ENCODE measurements at regions of chr16 and their contacts with region 1.

Region 1: DNA sequence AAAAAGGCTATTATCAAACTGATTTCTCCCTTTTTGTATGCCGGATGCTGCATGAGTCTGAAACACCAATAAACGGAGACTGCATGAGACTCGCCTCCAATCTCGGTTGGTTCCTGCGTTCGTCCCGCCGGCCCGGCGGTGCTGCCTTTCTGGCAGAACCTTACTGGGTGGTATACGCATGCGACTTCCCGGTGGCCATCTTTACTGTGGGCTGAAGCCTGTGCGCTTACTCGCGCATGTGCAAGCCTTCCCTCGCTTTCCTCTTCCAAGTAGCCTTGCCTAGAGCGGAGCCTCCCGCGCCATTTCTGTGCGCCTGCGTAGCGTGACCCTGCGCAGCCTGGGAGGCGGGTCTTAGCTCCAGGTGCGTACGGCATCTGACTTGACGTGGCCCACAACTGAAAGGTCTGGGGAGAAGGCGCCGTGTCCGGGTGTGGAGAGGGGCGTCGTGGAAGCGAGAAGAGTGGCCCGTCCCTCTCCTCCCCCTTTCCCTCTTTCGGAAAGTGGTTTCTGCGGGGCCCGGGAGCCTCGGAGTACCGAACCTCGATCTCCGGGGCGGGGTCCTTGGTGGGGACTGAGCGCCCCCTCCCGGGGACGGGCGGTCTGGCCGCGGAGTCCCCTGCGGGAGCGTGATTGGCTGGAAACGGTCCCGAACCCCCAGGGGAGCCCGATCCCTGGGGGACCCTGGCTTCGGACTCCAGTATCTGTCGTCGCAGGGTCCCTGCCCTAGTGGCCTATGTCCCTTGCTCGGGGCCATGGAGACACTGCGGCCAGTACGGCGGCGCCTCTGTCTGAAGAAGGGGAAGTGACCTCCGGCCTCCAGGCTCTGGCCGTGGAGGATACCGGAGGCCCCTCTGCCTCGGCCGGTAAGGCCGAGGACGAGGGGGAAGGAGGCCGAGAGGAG is at the start of gene PAGR1:
- DNase-seq: peak; percentile 98 to 99 (median 98)
- ATAC-seq: peak; percentile 71 to 82 (median 78)
- H3K4me3 ChIP-seq: peak within 1 kb of the TSS; percentile 66 to 89 (median 77)
- H3K27ac ChIP-seq: peak within 1 kb of the TSS; percentile 78 to 88 (median 87)
- H3K4me1 ChIP-seq: peaks cover 0 to 41% (median 13%) of the 10 kb centered on the region in 4 donors
- H3K27me3 ChIP-seq: no peaks in the 10 kb centered on the region
- CTCF ChIP-seq: peak; percentile 88 to 96 (median 94)
- POLR2A ChIP-seq: peak; percentile 79
- total RNA-seq, gene PAGR1: 8.5 to 26.1 (median 11.5) TPM

Region 2: DNA sequence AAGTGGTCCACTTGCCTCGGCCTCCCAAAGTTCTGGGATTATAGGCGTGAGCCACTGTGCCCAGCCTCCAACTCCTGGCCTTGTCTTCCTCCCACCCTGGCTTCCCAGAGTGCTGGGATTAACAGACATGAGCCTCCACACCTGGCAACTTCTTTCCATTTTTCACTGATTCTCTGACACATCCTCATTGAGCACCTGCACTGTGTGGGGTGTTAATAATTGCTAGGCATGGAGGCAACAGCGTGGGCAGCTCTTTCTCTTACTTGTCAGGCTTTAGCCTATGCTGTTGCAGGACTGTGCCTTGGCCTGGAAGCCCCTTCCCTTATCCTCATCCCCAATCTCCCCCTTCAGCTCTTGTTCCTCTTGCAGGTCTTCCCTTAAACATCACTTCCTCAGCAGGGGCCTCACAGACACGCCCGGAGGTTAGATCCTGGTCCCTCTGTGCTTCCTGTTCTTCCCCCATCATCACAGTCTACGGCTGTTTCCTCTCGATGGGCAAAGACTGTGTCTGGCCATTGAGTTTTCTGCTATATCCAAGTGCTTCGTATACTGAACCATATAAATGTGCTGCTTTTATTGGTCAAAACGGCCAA is 129.2 kb before region 1 on chr16:
- intact Hi-C with region 1: no loop called
- DNase-seq: no peak
- ATAC-seq: no peak
- H3K4me3 ChIP-seq: no peak overlapping the region
- H3K27ac ChIP-seq: no peak overlapping the region
- H3K4me1 ChIP-seq: no peaks in the 10 kb centered on the region
- H3K27me3 ChIP-seq: no peaks in the 10 kb centered on the region
- CTCF ChIP-seq: no peak
- POLR2A ChIP-seq: no peak

Region 3: DNA sequence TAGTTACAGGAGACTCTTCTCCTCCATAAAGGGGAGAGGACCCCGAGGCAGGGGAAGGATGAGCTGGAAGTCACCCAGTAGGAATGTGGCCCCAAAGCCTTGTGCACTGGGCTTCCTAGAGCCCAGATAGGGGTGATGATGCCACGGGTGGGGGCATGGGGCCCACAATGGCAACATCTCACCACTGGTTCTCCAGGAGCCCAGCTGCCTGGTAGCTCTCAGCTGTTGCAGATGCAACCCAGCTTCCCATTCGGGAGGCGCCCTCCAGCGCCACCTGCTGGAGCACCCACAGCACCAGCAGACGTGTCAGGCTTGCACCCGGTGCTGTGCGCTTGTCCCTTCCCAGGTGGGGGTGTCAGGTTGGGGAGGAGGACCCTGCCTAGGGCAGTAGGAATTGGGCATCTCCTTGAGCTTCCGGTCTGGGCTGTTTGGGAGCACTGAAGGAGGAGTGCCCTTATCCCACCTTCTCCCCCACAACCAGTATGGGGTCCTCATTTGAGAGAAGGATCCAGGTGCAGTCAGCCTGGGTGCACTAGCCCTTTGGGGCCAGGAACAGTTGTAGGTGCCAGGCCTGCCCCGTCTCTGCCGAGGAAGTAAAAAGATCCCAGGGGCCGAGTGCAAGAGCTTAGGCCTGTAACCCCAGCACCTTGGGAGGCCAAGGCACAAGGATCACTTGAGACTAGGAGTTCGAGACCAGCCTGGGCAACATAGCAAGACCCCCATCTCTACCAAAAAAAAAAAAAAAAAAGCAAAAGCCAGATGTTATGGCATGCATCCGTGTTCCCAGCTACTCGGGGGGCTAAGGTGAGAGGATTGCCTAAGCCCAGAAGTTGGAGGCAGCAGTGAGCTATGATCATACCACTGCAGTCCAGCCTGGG is 32.6 kb after region 1 on chr16:
- intact Hi-C with region 1: loop called in 1 of 2 experiments (anchors 5 kb)
- DNase-seq: peak; percentile 81 to 84 (median 83)
- ATAC-seq: peak; percentile 84 to 95 (median 89)
- H3K4me3 ChIP-seq: no peak overlapping the region
- H3K27ac ChIP-seq: no peak overlapping the region
- H3K4me1 ChIP-seq: no peaks in the 10 kb centered on the region
- H3K27me3 ChIP-seq: no peaks in the 10 kb centered on the region
- CTCF ChIP-seq: peak; percentile 84 to 95 (median 87)
- POLR2A ChIP-seq: no peak

Region 4: GRCh38 chr16:29995911-29996772 is 180.1 kb after region 1 on chr16 and contains the start of gene INO80E:
- intact Hi-C with region 1: loop called in 1 of 2 experiments (anchors 10 kb)
- DNase-seq: peak; percentile 99 to 100 (median 99)
- ATAC-seq: peak; percentile 96 to 98 (median 98)
- H3K4me3 ChIP-seq: peak within 1 kb of the TSS; percentile 68 to 94 (median 76)
- H3K27ac ChIP-seq: peak within 1 kb of the TSS; percentile 93 to 99 (median 95)
- H3K4me1 ChIP-seq: peaks cover 0 to 18% (median 6%) of the 10 kb centered on the region in 4 donors
- H3K27me3 ChIP-seq: no peaks in the 10 kb centered on the region
- CTCF ChIP-seq: no peak
- POLR2A ChIP-seq: peak; percentile 28
- total RNA-seq, gene INO80E: 22.3 to 45.8 (median 33.2) TPM